ENCODE measurements at regions of chr1 and their contacts with region 1.

Region 1: GRCh38 chr1:226547754-226548191 is 791 bp upstream of the STUM start:
- DNase-seq: peak; percentile 93

Region 2: DNA sequence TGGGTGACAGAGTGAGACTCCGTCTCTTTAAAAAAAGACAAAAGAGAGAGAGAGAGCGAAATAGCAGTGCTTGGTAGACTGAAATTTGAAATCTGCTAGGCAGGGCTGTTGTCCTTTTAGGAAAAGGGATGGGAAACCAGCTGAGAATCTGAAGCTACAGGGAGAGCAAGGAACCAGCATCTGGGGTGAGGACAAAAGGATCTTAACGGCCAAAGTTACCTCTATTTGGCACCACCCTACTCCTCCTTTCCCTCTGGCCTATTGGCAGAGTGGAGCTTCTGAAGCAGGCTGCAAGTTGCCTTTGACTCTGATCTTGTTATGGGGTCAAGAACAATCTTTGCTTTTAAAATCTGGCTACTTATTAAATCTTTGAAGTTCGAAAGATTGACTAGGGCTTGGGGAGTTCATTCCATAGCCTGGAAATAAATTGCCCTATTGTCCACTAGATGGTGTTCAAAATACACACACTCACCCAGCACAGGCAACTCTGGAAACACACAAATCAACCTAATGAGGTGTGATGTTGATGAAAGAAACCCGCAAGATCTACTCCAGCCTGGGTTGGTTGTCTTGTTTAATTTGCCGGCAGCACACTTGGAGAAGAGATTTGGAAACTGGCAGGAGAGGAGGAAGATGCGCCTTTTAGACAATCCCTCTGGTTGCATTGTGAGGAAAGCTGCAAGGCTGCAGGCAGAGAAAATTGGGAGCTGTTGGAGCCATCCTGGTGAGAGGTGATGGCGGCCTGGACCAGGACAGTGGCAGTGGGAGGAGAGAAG is 123.4 kb before region 1 on chr1:
- in situ Hi-C with region 1: loop called (anchors 25 kb)
- DNase-seq: peak; percentile 63

Region 3: GRCh38 chr1:226656601-226657277 is 109.0 kb after region 1 on chr1:
- in situ Hi-C with region 1: no loop called
- DNase-seq: peak; percentile 30

Region 4: GRCh38 chr1:226723657-226724532 is 176.1 kb after region 1 on chr1:
- in situ Hi-C with region 1: no loop called
- DNase-seq: peak; percentile 71